Dorsolateral prefrontal cortex (tissue), 120 donors: ENCODE measurements at regions of chr12 and their contacts with region 1.

Region 1: GRCh38 chr12:50103767-50104321 is at the start of gene GPD1:
- DNase-seq: peak; percentile 42 to 89 (median 82)
- H3K4me3 ChIP-seq: peak within 1 kb of the TSS in 52 of 59 donors; percentile 5 to 65 (median 38)
- H3K27ac ChIP-seq: peak within 1 kb of the TSS; percentile 57 to 99 (median 92)
- H3K27me3 ChIP-seq: no peaks in the 10 kb centered on the region
- CTCF ChIP-seq: peak in 5 of 56 donors; percentile 8 to 16 (median 11)
- total RNA-seq, gene GPD1: 2.0 to 47.2 (median 7.3) TPM

Region 2: GRCh38 chr12:49974231-49974675 is 129.6 kb before region 1 on chr12:
- intact Hi-C with region 1: no loop called
- DNase-seq: peak; percentile 57 to 88 (median 86)
- H3K4me3 ChIP-seq: peak overlapping the region in 36 of 59 donors; percentile 1 to 56 (median 24)
- H3K27ac ChIP-seq: peak overlapping the region in 50 of 59 donors; percentile 14 to 86 (median 70)
- H3K27me3 ChIP-seq: no peaks in the 10 kb centered on the region
- CTCF ChIP-seq: peak; percentile 22 to 89 (median 71)

Region 3: DNA sequence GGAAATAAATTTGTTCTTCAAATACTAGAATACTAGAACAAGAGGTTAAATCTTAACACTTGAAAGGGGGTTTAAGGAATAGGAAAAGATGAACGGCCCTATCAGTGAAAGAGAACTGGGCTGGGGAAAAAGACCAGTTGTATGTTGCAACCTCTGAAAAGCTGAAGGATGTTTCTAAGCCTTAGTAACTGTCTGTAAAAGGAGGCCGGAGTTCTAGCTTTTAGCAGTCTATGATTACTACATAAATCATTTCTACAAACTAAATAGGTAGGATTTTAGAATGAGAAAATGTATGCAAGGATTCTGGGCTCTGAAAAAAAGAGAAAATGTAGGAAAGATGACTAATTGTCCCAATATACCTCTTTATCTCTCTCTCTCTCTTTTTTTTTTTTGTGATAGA is 58.4 kb after region 1 on chr12:
- intact Hi-C with region 1: no loop called
- DNase-seq: no peak
- H3K4me3 ChIP-seq: no peak overlapping the region
- H3K27ac ChIP-seq: no peak overlapping the region
- H3K27me3 ChIP-seq: no peaks in the 10 kb centered on the region
- CTCF ChIP-seq: no peak

Region 4: GRCh38 chr12:50283229-50283923 is 179.5 kb after region 1 on chr12 and contains the start of gene LIMA1:
- intact Hi-C with region 1: loop called in 1 of 2 experiments (anchors 10 kb)
- DNase-seq: peak; percentile 71 to 95 (median 86)
- H3K4me3 ChIP-seq: peak within 1 kb of the TSS; percentile 67 to 100 (median 94)
- H3K27ac ChIP-seq: peak within 1 kb of the TSS in 56 of 59 donors; percentile 18 to 92 (median 78)
- H3K27me3 ChIP-seq: no peaks in the 10 kb centered on the region
- CTCF ChIP-seq: peak in 30 of 56 donors; percentile 7 to 68 (median 34)
- total RNA-seq, gene LIMA1: 11.9 to 34.8 (median 21.6) TPM